ENCODE measurements at regions of chr4 and their contacts with region 1.

Region 1: DNA sequence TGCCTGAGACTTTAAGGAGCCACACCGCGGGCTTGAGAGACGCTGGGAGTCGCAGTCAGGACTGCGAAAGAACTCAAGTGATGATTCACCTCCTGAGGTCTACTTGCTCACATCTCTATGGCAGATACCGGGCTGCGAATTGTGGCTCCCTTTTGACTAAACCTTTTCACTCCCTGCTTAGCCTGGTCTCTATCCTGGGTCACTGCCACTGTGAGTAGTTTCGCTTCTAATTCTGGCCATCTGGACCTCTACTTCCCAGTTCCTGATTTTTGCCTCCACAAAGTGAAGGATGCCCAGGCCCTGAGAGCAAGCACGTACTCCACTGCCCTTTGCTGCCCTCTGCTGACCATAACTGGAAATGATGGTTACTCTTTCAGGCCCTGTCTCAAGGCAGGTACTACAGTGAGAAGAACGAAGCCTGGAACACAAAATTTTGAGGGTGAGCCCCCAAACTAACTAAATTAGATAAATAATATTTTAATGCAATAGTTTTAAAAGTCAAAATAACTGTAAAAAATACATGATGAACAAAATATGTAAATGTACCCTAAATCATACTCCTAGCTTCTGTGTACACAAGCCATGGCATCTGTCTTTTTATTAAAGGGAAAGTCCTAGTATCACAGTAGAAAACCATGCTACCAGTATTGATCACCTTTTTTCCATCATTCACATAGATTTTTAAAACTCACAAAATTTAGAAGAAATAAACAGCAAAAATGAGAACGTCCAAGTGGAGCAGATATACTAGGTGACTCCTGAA is 16.7 kb downstream of the MAD2L1 start:
- DNase-seq: peak; percentile 79
- H3K4me3 ChIP-seq: no peak overlapping the region
- CTCF ChIP-seq: peak; percentile 81

Region 2: GRCh38 chr4:119329835-119330620 is 719.9 kb before region 1 on chr4:
- in situ Hi-C with region 1: loop called (anchors 10 kb)
- DNase-seq: no peak
- H3K4me3 ChIP-seq: no peak overlapping the region
- CTCF ChIP-seq: no peak

Region 3: DNA sequence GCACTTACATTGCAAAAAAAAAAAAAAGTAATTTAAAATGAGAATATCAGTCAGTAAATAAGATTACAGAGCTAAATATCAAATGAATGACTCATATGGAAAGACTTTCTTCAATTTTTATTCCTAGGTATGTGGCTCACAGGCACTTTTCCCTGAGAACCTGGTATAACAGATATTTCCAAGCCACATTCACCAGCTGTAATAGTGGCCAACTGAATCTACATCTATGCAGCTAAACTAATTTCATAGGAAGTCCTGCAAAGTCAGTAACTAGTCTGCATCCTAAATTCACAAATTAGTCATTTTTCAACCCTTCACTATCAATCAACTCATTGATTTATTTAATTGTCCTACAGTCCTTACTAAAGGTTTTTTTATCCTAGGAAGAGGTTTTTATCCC is 426.9 kb before region 1 on chr4:
- in situ Hi-C with region 1: loop called (anchors 25 kb)
- DNase-seq: peak; percentile 42
- H3K4me3 ChIP-seq: no peak overlapping the region
- CTCF ChIP-seq: no peak

Region 4: GRCh38 chr4:119663160-119663788 is 386.6 kb before region 1 on chr4:
- in situ Hi-C with region 1: no loop called
- DNase-seq: no peak
- H3K4me3 ChIP-seq: no peak overlapping the region
- CTCF ChIP-seq: no peak